IMR-90 (cell line): ENCODE measurements at regions of chr4 and their contacts with region 1.

Region 1: GRCh38 chr4:160546201-160546600 is 1443.3 kb downstream of the RAPGEF2 start:
- DNase-seq: no peak
- ATAC-seq: no peak
- H3K4me3 ChIP-seq: no peak overlapping the region
- H3K27ac ChIP-seq: no peak overlapping the region
- H3K4me1 ChIP-seq: no peaks in the 10 kb centered on the region
- H3K27me3 ChIP-seq: no peaks in the 10 kb centered on the region
- CTCF ChIP-seq: no peak
- POLR2A ChIP-seq: no peak
- RAD21 ChIP-seq: no peak

Region 2: GRCh38 chr4:160580581-160580980 is 34.4 kb after region 1 on chr4:
- CTCF ChIA-PET with region 1: no interaction called
- POLR2A ChIA-PET with region 1: no interaction called
- dilution Hi-C with region 1: no loop called
- in situ Hi-C with region 1: no loop called
- intact Hi-C with region 1: no loop called
- DNase-seq: no peak
- ATAC-seq: no peak
- H3K4me3 ChIP-seq: no peak overlapping the region
- H3K27ac ChIP-seq: no peak overlapping the region
- H3K4me1 ChIP-seq: no peaks in the 10 kb centered on the region
- H3K27me3 ChIP-seq: no peaks in the 10 kb centered on the region
- CTCF ChIP-seq: no peak
- POLR2A ChIP-seq: no peak
- RAD21 ChIP-seq: no peak

Region 3: GRCh38 chr4:160592258-160592657 is 46.1 kb after region 1 on chr4:
- CTCF ChIA-PET with region 1: no interaction called
- POLR2A ChIA-PET with region 1: no interaction called
- dilution Hi-C with region 1: no loop called
- in situ Hi-C with region 1: no loop called
- intact Hi-C with region 1: loop called (anchors 10 kb)
- DNase-seq: no peak
- ATAC-seq: no peak
- H3K4me3 ChIP-seq: no peak overlapping the region
- H3K27ac ChIP-seq: no peak overlapping the region
- H3K4me1 ChIP-seq: no peaks in the 10 kb centered on the region
- H3K27me3 ChIP-seq: no peaks in the 10 kb centered on the region
- CTCF ChIP-seq: no peak
- POLR2A ChIP-seq: no peak
- RAD21 ChIP-seq: no peak